Transverse colon (tissue), 4 donors: ENCODE measurements at regions of chr11 and their contacts with region 1.

Region 1: GRCh38 chr11:41950470-41951143 is 491.2 kb upstream of the LRRC4C start:
- DNase-seq: no peak
- H3K4me3 ChIP-seq: no peak overlapping the region
- H3K27ac ChIP-seq: no peak overlapping the region
- H3K4me1 ChIP-seq: no peaks in the 10 kb centered on the region
- H3K27me3 ChIP-seq: no peaks in the 10 kb centered on the region
- CTCF ChIP-seq: no peak
- EP300 ChIP-seq: no peak
- POLR2A ChIP-seq: no peak

Region 2: DNA sequence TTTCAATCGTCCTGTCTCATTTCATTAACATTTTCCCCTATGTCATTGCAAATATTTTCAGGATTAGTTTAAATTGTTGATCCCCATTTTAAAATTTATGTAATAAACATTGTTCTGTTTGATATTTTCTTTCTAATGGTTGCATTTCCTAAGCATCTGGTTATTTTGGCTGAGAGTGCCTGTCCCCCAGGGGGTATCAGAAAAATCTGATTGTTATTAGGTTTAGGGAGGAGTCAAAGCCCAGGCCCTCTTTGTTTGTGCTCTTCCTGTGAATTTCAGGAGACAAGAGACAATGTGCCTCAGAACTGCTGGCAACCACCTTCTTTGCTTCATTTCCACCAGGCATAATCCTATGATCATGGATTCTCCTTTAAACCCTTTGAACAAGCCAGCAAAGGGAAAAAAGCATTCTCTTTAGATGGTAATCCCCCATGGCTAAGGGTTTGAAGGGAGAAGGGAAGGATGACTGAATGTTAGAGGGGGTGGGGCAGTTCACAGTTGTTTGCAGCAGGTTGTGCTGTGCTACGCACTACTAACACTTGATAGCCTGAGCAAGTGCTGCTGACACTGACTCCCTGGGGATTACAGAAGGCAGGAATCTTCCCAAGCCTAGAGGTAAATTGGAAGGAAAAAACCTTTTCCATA is 28.7 kb before region 1 on chr11:
- in situ Hi-C with region 1: no loop called
- intact Hi-C with region 1: loop called (anchors 2 kb)
- DNase-seq: no peak
- H3K4me3 ChIP-seq: no peak overlapping the region
- H3K27ac ChIP-seq: no peak overlapping the region
- H3K4me1 ChIP-seq: no peaks in the 10 kb centered on the region
- H3K27me3 ChIP-seq: no peaks in the 10 kb centered on the region
- CTCF ChIP-seq: no peak
- EP300 ChIP-seq: no peak
- POLR2A ChIP-seq: no peak